ENCODE measurements at regions of chr1 and their contacts with region 1.

Region 1: GRCh38 chr1:153796791-153797659 is 21.8 kb downstream of the SLC27A3 start:
- DNase-seq: peak in 2 of 4 donors; percentile 72 to 78
- ATAC-seq: peak; percentile 84
- H3K4me3 ChIP-seq: no peak overlapping the region
- H3K27ac ChIP-seq: no peak overlapping the region
- H3K4me1 ChIP-seq: peaks cover 0 to 13% of the 10 kb centered on the region in 2 donors
- H3K27me3 ChIP-seq: no peaks in the 10 kb centered on the region
- CTCF ChIP-seq: peak; percentile 92 to 94

Region 2: DNA sequence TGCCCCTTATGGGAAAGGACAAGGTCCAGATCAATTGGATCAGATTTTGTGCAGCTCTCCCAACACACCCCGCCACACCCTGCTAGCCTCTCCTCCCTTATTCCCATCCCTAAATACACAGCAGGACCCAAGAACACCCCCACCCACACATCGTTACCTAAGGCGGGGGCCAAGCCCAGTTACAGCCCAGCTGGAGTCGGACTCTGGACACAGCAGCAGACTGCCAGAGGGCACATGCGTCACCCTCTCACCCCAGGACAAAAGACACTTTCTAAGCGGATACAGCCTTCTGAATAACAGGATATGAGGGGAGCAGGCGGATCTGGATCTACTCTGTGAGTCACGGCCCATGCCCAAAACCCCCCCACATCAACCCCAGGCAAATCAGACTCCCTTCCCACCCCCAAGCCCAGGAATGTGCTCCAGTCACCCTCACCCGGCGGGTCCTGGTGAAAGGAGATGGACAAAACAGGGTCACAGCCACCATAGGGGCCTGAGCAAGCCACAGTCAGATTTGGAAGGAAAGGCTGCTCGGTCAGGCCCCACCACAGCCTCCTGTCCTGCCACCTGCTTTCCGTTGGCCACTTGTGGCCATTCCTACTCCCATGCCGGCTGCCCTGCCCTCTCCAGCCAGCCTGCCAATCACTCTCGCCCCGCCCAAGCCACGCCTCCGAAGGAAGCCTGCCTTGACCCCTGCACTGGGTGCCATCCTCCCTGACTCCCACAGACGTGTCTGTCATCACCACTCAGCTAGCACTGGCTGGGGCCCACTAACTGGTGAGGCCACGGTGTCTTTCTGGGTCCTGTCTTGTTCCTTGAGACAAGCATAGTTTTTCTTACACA is 188.1 kb before region 1 on chr1:
- intact Hi-C with region 1: no loop called
- DNase-seq: peak in 3 of 4 donors; percentile 63 to 89 (median 80)
- ATAC-seq: peak; percentile 62
- H3K4me3 ChIP-seq: peak overlapping the region; percentile 13 to 51
- H3K27ac ChIP-seq: peak overlapping the region; percentile 82 to 88
- H3K4me1 ChIP-seq: peaks cover 30 to 35% of the 10 kb centered on the region in 2 donors
- H3K27me3 ChIP-seq: no peaks in the 10 kb centered on the region
- CTCF ChIP-seq: no peak

Region 3: DNA sequence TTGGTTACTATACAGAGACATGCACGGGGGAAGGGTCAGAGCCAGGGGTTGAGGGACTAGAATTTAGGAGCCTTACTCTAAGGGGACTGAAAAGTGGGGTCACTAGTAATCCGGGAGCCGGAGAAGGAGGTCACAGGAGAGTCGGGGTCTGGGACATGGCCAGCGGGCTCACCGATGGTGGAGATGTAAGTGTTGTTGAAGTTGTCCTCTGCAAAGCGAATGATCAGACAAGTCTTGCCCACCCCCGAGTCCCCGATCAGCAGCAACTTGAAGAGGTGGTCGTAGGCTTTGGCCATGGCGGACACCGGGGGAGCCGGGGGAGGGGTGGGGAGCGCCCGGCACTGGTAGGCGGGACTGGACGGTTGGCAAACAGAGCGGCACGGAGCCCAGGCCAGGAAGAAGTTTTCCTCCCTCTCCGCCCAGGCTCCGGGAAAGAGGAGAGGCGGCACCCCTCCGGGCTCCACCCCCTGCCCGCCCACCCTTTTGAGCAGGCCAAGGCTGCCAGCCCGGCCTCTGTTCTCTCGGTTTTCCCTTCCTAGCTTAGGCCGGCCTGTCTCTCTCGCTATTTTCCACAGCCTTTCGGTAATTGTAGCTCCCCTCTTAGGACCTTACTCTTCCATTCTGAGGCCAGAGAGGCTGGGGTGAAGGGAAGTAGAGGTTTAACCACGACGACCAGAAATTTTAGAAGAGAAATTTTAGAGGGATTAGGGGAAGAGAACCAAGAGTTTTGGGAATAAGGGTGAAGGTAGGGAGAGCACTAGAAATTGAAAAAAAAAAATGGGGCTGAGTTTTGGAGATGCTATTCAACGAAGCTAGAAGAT is 189.1 kb after region 1 on chr1 and contains the start of gene RAB13:
- intact Hi-C with region 1: loop called in 1 of 2 experiments (anchors 10 kb)
- DNase-seq: peak; percentile 80 to 93 (median 90)
- ATAC-seq: peak; percentile 89
- H3K4me3 ChIP-seq: peak within 1 kb of the TSS; percentile 54 to 70
- H3K27ac ChIP-seq: peak within 1 kb of the TSS; percentile 86 to 93
- H3K4me1 ChIP-seq: peaks cover 20 to 54% of the 10 kb centered on the region in 2 donors
- H3K27me3 ChIP-seq: no peaks in the 10 kb centered on the region
- CTCF ChIP-seq: no peak
- polyA plus RNA-seq, gene RAB13: 151 to 171 (median 161) TPM